ENCODE measurements at regions of chr7 and their contacts with region 1.

Region 1: DNA sequence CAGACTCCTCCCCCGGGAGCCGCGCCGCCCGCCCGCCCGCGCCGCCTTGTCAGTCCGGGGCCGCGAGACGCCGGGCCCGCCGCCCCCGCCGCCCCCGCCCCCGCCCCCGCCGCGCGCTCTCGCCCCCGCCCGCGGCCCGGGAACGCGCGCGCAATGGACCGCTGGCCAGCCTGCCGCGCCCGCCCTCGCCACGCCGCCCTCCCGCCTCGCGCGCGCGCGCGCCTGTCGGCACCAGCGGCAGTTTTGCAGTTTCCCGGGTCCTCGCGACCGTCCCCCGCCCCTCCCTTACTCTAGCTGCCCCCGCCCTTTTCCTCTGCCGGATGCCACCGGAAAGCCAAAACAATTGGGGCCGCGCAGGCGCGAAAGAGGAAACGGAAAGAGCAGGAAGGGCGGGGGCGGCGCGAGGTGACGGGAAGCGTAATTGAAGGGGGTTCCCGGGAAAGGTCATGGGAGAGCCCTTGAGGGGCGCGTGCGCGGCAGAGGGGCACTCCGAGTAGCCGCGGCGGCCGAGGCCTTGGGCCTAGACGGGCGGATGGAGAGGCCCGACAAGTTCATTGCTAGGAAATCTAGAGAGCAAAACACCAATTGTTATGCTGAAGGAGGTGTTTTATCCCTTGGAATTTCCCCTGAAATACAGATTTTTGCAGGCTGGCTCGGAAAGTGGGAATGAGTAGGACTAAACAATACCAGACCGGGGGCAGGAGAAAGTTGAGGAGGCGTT is 400 bp upstream of the KBTBD2 start:
- DNase-seq: peak; percentile 85 to 95
- H3K4me3 ChIP-seq: peak overlapping the region; percentile 69 to 99 (median 86)
- H3K27ac ChIP-seq: peak overlapping the region; percentile 93
- H3K4me1 ChIP-seq: peaks cover 3 to 13% (median 6%) of the 10 kb centered on the region in 4 experiments; a peak in 6 of 7 replicates
- H3K27me3 ChIP-seq: no peaks in the 10 kb centered on the region
- CTCF ChIP-seq: no peak
- EP300 ChIP-seq: no peak
- POLR2A ChIP-seq: no peak; a peak in 1 of 3 replicates
- RAD21 ChIP-seq: no peak

Region 2: GRCh38 chr7:32905175-32905662 is 13.3 kb after region 1 on chr7:
- CTCF ChIA-PET with region 1: interaction called, 3 read pairs
- POLR2A ChIA-PET with region 1: interaction called, 21 read pairs
- DNase-seq: peak in 1 of 2 experiments; percentile 68
- H3K4me3 ChIP-seq: peak overlapping the region; percentile 6 to 61 (median 37); a peak in 5 of 8 replicates
- H3K27ac ChIP-seq: no peak overlapping the region
- H3K4me1 ChIP-seq: peaks cover 0 to 4% (median 0%) of the 10 kb centered on the region in 4 experiments; a peak in 2 of 7 replicates
- H3K27me3 ChIP-seq: no peaks in the 10 kb centered on the region; a peak in 1 of 7 replicates
- CTCF ChIP-seq: no peak
- EP300 ChIP-seq: no peak
- POLR2A ChIP-seq: no peak
- RAD21 ChIP-seq: no peak

Measured in H1 (cell line).